ENCODE measurements at regions of chr2 and their contacts with region 1.

Region 1: DNA sequence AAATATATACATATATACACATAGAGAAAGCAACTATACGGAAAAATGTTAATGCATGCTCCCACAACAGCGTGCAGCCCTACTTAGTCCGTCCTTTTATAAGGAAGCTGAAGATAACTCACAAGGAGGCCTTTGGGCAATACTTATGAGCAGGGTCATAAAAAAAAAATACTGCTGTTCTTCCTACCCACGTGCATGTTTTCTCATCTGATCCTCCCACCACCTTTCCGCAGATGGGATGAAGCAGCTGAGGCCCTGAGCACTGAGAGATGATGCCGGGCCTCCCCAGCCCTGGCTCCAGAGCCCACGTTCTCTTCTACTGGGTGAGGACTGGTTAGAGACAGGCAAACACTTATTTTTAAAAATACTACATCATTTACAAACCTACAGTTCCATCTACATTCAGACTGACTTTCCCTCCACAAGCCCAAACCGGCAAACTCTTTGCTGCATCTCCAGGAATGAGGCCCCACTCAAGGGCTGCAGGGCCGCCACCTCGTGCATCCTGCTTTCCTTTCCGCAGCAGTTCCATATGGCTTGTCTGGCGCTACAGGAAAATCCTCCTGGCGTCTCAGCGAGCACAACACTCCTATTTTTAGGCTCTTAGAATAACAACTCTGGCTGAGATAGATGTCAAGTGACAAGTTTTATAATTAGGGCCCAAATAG is 41.6 kb downstream of the TBC1D8 start:
- DNase-seq: peak; percentile 90
- H3K4me3 ChIP-seq: peak overlapping the region in 1 of 3 experiments; percentile 6
- H3K27ac ChIP-seq: peak overlapping the region; percentile 66
- H3K4me1 ChIP-seq: peaks cover 24% of the 10 kb centered on the region
- H3K27me3 ChIP-seq: no peaks in the 10 kb centered on the region
- CTCF ChIP-seq: no peak
- POLR2A ChIP-seq: no peak

Region 2: GRCh38 chr2:101057051-101057933 is 52.3 kb before region 1 on chr2:
- CTCF ChIA-PET with region 1: no interaction called
- POLR2A ChIA-PET with region 1: no interaction called
- dilution Hi-C with region 1: no loop called
- intact Hi-C with region 1: loop called (anchors 5 kb)
- DNase-seq: no peak
- H3K4me3 ChIP-seq: no peak overlapping the region
- H3K27ac ChIP-seq: no peak overlapping the region
- H3K4me1 ChIP-seq: no peaks in the 10 kb centered on the region
- H3K27me3 ChIP-seq: no peaks in the 10 kb centered on the region
- CTCF ChIP-seq: no peak
- POLR2A ChIP-seq: no peak

Region 3: DNA sequence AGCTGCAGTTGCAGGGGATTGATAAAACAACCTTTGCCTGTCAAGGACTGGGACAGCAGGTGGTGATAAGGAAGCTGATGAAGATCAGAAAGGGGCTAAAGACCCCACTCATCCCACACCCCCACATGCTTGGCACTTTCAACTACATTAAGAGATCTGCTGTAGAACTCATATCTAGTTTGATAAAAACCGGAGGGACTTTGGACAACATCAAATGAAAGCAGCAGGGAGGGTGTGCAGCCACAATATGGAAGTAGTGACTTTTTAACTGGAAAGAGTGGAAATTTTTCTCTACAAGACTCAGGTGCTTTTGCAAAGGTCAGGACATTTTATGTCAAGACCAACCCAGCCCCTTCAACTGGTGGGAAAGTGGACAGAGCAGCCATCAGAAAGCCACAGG is 15.2 kb before region 1 on chr2:
- CTCF ChIA-PET with region 1: no interaction called
- POLR2A ChIA-PET with region 1: no interaction called
- dilution Hi-C with region 1: no loop called
- intact Hi-C with region 1: no loop called
- DNase-seq: no peak
- H3K4me3 ChIP-seq: no peak overlapping the region
- H3K27ac ChIP-seq: no peak overlapping the region
- H3K4me1 ChIP-seq: no peaks in the 10 kb centered on the region
- H3K27me3 ChIP-seq: no peaks in the 10 kb centered on the region
- CTCF ChIP-seq: no peak
- POLR2A ChIP-seq: no peak

Region 4: DNA sequence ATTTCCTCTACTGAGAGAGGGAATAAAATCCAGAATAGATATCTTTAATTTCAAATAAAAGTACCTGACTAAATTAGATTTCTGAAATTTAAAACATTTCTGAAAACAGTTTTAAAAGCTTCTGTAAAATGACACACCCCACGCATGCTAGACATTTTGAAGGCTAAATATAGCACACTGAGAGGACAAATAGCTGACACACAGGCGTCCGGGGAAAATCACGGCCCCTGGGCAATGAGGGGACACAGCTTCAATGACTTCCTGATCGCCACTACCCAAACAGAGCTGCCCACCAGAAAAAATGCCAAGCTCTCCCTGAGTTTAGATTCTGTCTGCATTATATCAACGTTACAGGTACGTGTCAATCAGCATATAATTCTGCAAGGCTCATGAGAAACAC is 30.7 kb after region 1 on chr2:
- CTCF ChIA-PET with region 1: no interaction called
- POLR2A ChIA-PET with region 1: no interaction called
- dilution Hi-C with region 1: no loop called
- intact Hi-C with region 1: no loop called
- DNase-seq: no peak
- H3K4me3 ChIP-seq: no peak overlapping the region
- H3K27ac ChIP-seq: no peak overlapping the region
- H3K4me1 ChIP-seq: no peaks in the 10 kb centered on the region
- H3K27me3 ChIP-seq: no peaks in the 10 kb centered on the region
- CTCF ChIP-seq: no peak
- POLR2A ChIP-seq: no peak

Region 5: DNA sequence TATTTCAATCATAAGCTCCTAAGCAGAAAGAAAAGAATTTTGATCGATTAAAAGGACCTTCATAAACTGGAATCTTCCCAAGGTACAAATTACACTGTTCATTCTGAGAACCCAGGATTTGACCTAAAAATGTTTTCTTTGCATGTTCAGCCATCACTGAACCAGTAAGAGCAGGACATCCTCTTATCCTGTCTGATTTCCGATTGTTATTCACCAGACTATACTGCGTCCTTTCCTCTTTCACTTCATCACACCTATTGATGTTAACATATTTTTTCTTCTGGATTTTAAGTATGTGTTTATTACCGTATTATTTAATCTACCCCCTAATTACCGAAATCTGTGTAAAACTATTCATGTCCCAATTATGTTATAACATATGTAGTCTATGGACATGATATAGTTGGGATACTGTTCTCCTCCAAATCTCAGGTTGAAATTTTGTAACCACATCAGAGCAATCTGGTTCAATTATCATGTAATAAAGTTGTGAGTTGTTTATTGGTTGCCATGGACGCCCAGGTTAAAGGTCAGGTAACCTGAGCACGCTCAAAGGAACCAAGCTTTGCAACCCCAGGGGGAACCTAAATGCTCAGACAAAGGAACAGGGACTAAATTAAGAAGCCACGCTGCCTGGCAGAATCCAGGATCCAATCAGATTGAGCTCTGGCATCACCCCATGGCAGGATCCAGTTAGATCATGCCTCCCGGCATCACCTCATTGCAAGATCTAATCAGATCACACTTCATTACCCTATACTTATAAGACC is 53.2 kb after region 1 on chr2:
- CTCF ChIA-PET with region 1: no interaction called
- POLR2A ChIA-PET with region 1: no interaction called
- dilution Hi-C with region 1: no loop called
- intact Hi-C with region 1: no loop called
- DNase-seq: peak; percentile 34
- H3K4me3 ChIP-seq: no peak overlapping the region
- H3K27ac ChIP-seq: no peak overlapping the region
- H3K4me1 ChIP-seq: peaks cover 8% of the 10 kb centered on the region
- H3K27me3 ChIP-seq: no peaks in the 10 kb centered on the region
- CTCF ChIP-seq: no peak
- POLR2A ChIP-seq: no peak

Measured in endothelial cell of umbilical vein (primary cell).